ENCODE measurements at regions of chr5 and their contacts with region 1.

Region 1: GRCh38 chr5:172714491-172715421 is 56.2 kb downstream of the DUSP1 start:
- DNase-seq: peak; percentile 67
- ATAC-seq: peak; percentile 88
- H3K4me3 ChIP-seq: no peak overlapping the region
- H3K27ac ChIP-seq: no peak overlapping the region
- H3K4me1 ChIP-seq: peaks cover 0 to 15% of the 10 kb centered on the region in 2 experiments; a peak in 2 of 4 replicates
- H3K27me3 ChIP-seq: no peaks in the 10 kb centered on the region; the same call in 1 of the 2 replicates
- CTCF ChIP-seq: peak in 2 of 3 experiments; percentile 87 to 92; a peak in 4 of 6 replicates
- POLR2A ChIP-seq: no peak
- RAD21 ChIP-seq: no peak

Region 2: DNA sequence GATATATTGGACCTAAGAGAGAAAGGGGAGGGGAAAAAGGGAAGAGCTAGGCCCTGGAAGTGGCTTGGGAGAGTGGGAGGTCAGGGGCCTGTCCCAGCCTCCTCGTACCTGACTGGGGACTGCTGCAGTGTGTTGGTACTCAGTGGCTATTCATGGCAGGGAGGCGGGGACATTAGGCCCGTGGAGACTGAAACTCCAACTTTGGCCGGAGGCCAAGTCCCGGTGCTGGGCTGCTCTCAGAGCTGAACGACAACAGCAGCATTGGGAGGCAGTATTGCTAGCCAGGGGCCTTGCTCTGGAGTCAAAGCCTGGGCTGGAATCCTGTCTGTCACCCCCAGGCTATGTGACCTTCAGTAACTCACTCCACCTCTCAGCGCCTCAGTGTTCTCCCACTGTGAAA is 35.9 kb before region 1 on chr5:
- CTCF ChIA-PET with region 1: no interaction called
- POLR2A ChIA-PET with region 1: no interaction called
- RAD21 ChIA-PET with region 1: no interaction called
- intact Hi-C with region 1: no loop called
- DNase-seq: no peak
- ATAC-seq: no peak
- H3K4me3 ChIP-seq: no peak overlapping the region
- H3K27ac ChIP-seq: no peak overlapping the region
- H3K4me1 ChIP-seq: peaks cover 7 to 8% of the 10 kb centered on the region in 2 experiments; a peak in 2 of 4 replicates
- H3K27me3 ChIP-seq: no peaks in the 10 kb centered on the region
- CTCF ChIP-seq: no peak
- POLR2A ChIP-seq: no peak
- RAD21 ChIP-seq: no peak

Region 3: DNA sequence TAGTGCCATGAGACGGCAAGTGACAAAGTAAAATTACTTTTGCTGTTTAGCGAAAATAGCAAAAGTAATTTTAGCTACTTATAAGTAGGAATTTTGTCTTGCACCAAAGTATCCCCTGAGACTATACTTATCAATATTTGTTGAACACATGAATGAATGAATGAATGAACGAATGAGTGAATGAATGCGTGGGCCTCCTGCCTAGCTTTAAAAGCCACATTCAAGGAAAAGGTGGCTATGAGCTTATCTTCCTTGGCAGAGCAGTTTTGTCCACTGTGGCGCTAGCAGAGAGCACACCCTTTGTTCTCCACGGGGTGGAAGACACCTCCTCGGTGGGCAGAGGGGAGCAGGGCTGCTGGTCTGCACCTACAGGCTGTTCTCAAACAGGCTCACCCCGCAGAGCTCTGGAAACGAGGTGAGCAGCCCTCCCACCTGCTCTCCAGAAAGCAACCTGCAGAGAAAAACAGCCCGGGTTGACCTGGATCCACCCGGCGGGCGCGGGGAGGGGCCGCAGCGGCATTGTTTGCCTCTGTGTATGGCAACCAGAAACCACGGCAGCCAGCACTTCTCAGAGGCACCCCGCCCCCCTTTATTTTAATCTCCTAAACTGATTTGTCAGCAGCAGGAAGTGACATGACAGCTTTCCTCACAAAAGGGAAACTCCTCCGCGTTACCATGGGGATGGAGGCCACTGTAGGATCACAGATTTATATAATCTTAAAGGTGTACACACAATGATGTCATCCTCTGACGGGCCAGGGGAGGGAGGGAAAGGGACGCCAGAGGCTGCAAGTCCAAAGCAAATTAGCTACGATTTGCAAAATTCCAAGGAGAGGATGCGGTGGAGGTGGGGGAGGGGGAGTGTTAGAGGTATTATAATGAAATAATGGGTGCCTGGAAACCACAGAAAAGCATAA is 50.4 kb after region 1 on chr5:
- CTCF ChIA-PET with region 1: interaction called, 7 read pairs
- POLR2A ChIA-PET with region 1: interaction called, 16 read pairs
- RAD21 ChIA-PET with region 1: no interaction called
- intact Hi-C with region 1: loop called (anchors 2 kb)
- DNase-seq: peak; percentile 98
- ATAC-seq: peak; percentile 83
- H3K4me3 ChIP-seq: peak overlapping the region; percentile 60
- H3K27ac ChIP-seq: peak overlapping the region; percentile 77
- H3K4me1 ChIP-seq: peaks cover 23 to 40% of the 10 kb centered on the region in 2 experiments
- H3K27me3 ChIP-seq: no peaks in the 10 kb centered on the region
- CTCF ChIP-seq: no peak
- POLR2A ChIP-seq: peak; percentile 30
- RAD21 ChIP-seq: no peak

Region 4: DNA sequence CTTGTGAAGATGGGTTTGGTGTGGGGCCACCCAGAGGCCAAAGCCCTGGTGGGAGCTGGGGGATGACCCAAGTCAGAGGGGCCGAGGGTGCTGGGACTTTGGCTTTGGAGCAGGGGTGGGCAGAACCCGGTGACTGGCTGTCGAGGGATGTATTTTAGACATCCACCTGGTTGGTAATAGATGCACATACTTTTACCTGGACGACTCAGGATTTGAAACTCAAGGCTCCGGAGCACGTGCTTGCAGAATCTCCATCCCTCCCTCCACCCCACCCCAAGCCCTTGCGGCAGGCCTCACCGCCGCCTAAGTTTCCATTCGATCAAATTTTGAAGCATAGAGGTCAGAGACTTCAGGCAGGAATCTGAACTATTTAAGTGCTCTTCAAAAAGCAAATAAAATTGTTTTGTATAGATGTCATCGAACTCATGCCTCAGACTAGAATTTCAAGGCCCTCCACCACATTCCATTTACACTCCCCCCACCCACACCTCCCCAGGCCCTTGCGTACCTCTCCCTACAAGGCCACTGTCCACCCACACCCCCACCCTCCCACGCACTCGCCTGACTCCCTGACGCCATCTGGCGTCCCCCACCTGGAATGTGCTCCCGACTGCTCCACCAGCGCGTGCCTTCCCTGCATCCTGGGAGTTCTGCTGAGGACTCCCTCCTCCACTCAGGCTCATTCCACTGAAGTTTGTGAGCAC is 187.9 kb after region 1 on chr5:
- CTCF ChIA-PET with region 1: interaction called, 7 read pairs
- POLR2A ChIA-PET with region 1: interaction called, 3 read pairs
- RAD21 ChIA-PET with region 1: no interaction called
- intact Hi-C with region 1: loop called (anchors 2 kb)
- DNase-seq: peak; percentile 8
- ATAC-seq: peak; percentile 83
- H3K4me3 ChIP-seq: no peak overlapping the region
- H3K27ac ChIP-seq: no peak overlapping the region
- H3K4me1 ChIP-seq: peaks cover 12 to 35% of the 10 kb centered on the region in 2 experiments; a peak in 3 of 4 replicates
- H3K27me3 ChIP-seq: no peaks in the 10 kb centered on the region
- CTCF ChIP-seq: peak in 2 of 3 experiments; percentile 57 to 58; a peak in 4 of 6 replicates
- POLR2A ChIP-seq: no peak
- RAD21 ChIP-seq: no peak

Region 5: DNA sequence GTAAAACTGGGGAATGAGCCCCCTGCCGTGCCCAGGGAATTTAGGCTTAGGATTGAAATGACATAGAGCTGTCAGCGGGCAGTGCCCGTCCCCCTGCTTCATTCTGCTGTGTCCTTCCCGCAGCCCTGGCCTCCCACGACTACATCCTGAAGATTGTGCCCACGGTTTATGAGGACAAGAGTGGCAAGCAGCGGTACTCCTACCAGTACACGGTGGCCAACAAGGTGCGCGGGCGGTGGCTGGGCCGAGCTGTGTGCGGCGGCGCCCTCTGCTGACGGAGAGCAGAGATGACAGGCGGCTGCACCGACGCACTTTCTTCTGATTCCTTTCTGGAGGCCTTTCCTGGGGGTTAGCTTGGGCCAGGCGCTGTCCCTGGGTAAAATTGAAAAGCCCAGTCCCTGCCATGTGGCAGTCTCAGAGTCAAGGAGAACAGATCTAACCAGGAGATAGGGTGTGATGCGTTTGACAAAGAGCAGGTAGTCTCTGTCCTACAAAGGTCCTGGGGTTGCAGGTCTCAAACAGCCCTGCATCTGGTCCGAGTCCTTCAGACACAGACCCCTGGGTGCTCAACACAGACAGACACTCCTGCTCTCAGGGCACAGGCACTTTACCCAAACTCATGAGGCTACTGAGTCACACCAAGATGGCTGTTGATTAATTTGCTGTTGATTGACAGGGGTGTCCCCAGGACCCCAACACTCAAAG is 217.7 kb after region 1 on chr5:
- CTCF ChIA-PET with region 1: interaction called, 78 read pairs
- POLR2A ChIA-PET with region 1: interaction called, 5 read pairs
- RAD21 ChIA-PET with region 1: interaction called, 7 to 8 read pairs
- intact Hi-C with region 1: loop called (anchors 1 kb)
- DNase-seq: peak; percentile 10
- ATAC-seq: peak; percentile 96
- H3K4me3 ChIP-seq: no peak overlapping the region
- H3K27ac ChIP-seq: no peak overlapping the region
- H3K4me1 ChIP-seq: no peaks in the 10 kb centered on the region; a peak in 1 of 4 replicates
- H3K27me3 ChIP-seq: no peaks in the 10 kb centered on the region
- CTCF ChIP-seq: peak; percentile 87 to 91 (median 90)
- POLR2A ChIP-seq: no peak
- RAD21 ChIP-seq: peak; percentile 97

Region 6: DNA sequence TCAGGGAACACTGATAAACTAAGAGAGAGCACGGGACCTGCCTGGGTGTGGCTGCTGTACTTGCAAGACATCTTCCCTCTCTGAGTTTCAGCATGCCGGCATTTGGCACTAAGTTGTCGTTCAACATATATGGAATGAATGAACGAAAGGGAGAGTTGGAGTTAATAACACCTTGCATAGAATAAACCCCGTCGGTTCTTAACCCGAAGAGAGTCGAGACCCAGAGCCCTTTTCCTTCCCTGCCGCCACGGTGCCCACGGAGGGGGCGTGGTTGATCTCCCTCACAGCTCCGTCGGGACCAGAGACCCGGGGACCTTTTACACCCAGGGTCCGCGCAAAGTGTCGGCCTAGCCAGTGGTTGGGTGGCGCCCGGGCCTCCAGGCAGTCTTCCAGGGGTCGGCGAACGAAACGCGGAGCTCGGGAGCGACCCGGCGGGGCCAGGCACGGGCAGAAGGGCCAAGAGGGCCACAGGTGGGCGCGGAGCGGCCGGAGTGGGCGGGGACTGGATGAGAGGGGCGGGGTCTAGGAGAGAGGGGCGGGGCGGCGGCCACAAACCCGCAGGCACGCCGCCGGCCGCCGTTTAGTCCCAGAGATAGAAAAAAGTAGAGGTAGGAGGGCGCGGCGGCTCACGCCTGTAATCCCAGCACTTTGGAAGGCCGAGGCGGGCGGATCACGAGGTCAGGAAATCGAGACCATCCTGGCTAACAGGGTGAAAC is 243.7 kb after region 1 on chr5:
- CTCF ChIA-PET with region 1: interaction called, 17 read pairs
- POLR2A ChIA-PET with region 1: interaction called, 5 read pairs
- RAD21 ChIA-PET with region 1: interaction called, 3 read pairs
- intact Hi-C with region 1: no loop called
- DNase-seq: peak; percentile 29
- ATAC-seq: peak; percentile 82
- H3K4me3 ChIP-seq: peak overlapping the region; percentile 79 to 100
- H3K27ac ChIP-seq: peak overlapping the region; percentile 63
- H3K4me1 ChIP-seq: peaks cover 7 to 45% of the 10 kb centered on the region in 2 experiments
- H3K27me3 ChIP-seq: no peaks in the 10 kb centered on the region
- CTCF ChIP-seq: no peak
- POLR2A ChIP-seq: peak; percentile 32
- RAD21 ChIP-seq: no peak

Measured in HCT116 (cell line).